WTC11 (cell line): ENCODE measurements at regions of chr5 and their contacts with region 1.

Region 1: GRCh38 chr5:1763548-1763911 is 36.1 kb downstream of the MRPL36 start:
- DNase-seq: peak; percentile 70
- ATAC-seq: peak; percentile 79
- H3K4me3 Mint-ChIP-seq: no peak overlapping the region
- H3K27ac Mint-ChIP-seq: no peak overlapping the region
- H3K4me1 Mint-ChIP-seq: peaks cover 11% of the 10 kb centered on the region
- H3K27me3 Mint-ChIP-seq: no peaks in the 10 kb centered on the region; the same call in 1 of the 2 replicates
- CTCF ChIP-seq: peak; percentile 36

Region 2: DNA sequence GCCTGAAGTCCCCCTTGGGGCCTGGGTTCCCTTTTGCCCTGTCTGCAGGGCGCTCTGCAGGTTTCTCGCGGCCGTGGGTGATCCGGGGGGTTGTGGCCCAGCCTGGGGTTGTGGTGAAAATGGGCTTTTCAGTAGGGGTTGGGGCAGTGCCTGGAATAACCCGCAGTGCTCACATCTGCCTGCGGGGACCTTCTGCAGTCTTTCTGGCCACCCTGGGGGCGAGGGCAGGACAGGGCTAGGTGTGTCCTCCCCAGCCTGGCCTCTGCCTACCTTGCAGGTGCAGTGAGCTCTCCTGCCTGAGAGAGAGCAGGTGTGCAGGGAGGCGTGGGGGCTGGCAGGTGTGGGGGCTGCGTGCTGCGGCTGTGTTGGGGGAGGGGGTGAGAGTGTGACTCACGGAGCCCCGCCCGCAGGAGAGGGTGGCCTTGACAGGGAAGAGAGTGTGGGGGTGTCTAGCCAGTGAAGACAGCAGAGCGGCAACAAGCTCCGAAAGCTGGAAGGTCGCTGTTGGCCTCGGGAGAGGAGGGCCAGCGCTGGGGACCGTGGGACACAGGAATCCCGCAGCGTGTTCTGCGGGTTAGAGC is 95.3 kb before region 1 on chr5:
- CTCF ChIA-PET with region 1: interaction called, 11 read pairs
- POLR2A ChIA-PET with region 1: no interaction called
- DNase-seq: peak; percentile 53
- ATAC-seq: peak; percentile 70
- H3K4me3 Mint-ChIP-seq: peak overlapping the region; percentile 62
- H3K27ac Mint-ChIP-seq: no peak overlapping the region
- H3K4me1 Mint-ChIP-seq: peaks cover 23% of the 10 kb centered on the region
- H3K27me3 Mint-ChIP-seq: peaks cover 41% of the 10 kb centered on the region
- CTCF ChIP-seq: no peak

Region 3: GRCh38 chr5:1801222-1801966 is 37.9 kb after region 1 on chr5 and contains the start of gene NDUFS6:
- CTCF ChIA-PET with region 1: interaction called, 15 read pairs
- POLR2A ChIA-PET with region 1: no interaction called
- DNase-seq: peak; percentile 80
- ATAC-seq: peak; percentile 60
- H3K4me3 Mint-ChIP-seq: peak within 1 kb of the TSS; percentile 99
- H3K27ac Mint-ChIP-seq: peak within 1 kb of the TSS; percentile 100
- H3K4me1 Mint-ChIP-seq: peaks cover 18% of the 10 kb centered on the region
- H3K27me3 Mint-ChIP-seq: no peaks in the 10 kb centered on the region
- CTCF ChIP-seq: no peak
- total RNA-seq, gene NDUFS6: 75.8 to 84.3 TPM (median 77.4 TPM) in 3 replicates

Region 4: DNA sequence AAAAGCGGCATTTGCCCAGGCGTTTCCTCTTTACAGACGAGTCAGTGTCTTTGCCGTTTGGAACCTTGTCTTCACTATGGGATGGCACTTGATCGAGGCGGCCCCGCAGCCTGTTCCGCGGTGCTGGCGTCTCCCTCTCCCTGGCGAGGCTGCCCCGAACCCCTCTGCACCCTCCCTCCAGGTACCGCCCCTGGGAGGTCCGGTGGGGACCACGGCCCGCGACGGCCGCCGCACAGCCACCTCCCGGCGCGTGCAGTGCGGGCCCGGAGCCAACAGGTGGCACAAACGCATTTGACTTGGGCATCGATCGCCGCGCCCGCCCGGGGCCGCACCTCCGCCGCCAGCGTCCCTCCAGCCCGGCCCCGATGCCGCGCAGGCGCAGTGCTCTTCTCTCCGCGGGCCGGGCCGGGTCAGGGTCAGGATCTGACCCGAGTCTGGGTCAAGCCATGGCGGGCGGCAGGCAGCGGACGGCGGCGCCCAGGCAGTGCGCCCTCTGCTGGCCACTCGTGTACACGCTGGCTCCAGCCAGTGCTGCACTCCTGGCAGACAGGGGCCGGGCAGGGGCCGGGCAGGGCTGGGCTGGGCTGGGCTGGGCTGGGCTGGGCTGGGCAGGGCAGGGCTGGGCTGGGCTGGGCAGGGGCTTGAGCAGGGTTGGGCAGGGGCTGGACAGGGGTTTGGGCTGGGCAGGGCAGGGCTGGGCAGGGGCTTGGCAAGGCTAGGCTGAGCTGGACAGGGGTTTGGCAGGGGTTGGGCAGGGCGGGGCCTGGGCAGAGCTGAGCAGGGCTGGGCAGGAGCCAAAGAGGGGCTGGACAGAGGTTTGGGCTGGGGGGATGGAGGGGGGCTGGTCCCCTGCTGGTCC is 275.0 kb after region 1 on chr5:
- CTCF ChIA-PET with region 1: interaction called, 19 read pairs
- POLR2A ChIA-PET with region 1: no interaction called
- DNase-seq: peak; percentile 93
- ATAC-seq: peak; percentile 91
- H3K4me3 Mint-ChIP-seq: peak overlapping the region; percentile 62
- H3K27ac Mint-ChIP-seq: no peak overlapping the region
- H3K4me1 Mint-ChIP-seq: peaks cover 4% of the 10 kb centered on the region; the same call in 1 of the 2 replicates
- H3K27me3 Mint-ChIP-seq: peaks cover 3% of the 10 kb centered on the region; the same call in 1 of the 2 replicates
- CTCF ChIP-seq: peak; percentile 85